Activated CD4-positive, alpha-beta memory T cell treated with anti-CD3 and anti-CD28 coated beads for 36 hours (primary cell): ENCODE measurements at regions of chr15 and their contacts with region 1.

Region 1: DNA sequence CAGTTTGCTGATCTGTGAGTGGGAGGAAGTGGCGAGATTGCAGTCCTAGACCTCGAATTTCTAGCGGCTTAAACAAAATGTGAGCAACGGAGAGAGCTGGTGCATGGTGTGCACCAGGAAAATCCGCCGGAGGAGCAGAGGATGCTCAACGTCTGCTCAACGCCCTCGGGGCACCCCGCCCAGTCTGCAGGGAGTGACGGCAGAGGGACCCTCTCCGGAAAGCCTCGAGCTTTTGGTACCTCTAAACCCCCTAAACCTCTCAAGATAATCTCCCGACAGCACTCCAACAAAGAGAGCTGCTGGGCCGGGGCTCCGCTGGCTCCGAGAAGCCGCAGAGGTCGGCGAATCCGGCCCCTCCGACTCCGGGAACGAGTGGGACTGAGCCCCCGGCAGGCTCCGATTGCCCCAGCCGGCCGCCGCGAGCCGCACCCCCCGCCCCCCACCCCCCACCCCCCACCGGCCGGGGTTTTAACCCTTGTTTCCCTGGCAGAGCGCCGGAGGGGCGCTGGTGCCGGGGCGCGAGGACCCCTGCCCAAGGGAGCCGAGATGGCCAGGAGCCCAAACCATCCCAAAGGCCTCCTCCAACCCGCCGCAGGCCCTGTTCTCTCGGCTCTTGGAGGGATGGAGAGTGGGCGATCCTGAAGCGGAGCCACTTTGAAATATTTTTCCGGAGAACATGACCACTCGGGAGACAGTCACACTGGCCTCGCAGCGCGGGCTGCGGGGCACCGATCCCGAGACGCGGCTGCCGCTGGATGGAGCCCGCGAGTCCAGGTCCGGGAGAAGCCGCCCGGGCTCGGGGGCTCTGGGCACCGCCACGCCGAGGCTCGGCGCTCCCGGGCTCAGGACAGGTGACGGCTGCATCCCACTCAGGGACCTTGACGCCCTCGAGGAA is 1.5 kb downstream of the MEGF11 start:
- DNase-seq: peak; percentile 65
- H3K4me3 Mint-ChIP-seq: peak overlapping the region; percentile 60
- H3K27ac Mint-ChIP-seq: no peak overlapping the region
- H3K4me1 Mint-ChIP-seq: peaks cover 9% of the 10 kb centered on the region
- H3K27me3 Mint-ChIP-seq: peaks cover 58% of the 10 kb centered on the region

Region 2: DNA sequence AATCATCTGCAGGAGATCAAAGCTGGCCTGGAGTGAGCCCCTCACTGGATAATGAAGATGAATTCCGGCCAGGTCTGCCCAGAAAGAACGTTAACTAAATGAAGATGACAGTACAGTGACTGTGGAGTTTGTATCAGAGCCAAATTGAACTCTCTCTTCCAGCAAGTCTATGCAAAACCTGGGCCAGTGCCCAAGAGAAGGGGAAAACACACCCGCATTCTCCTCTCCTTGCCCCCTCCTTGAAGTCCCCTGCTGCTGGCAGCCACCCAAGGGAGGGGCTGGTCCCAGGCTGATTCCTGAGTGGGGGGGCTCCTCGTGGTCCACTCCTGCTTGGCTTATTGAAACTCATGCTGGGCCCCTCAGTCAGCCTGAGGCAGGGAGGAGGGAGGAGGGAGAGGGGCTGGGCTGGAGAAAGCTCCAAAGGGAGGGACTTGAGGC is 227.0 kb before region 1 on chr15:
- CTCF ChIA-PET with region 1: no interaction called
- POLR2A ChIA-PET with region 1: no interaction called
- intact Hi-C with region 1: no loop called
- DNase-seq: no peak
- H3K4me3 Mint-ChIP-seq: no peak overlapping the region
- H3K27ac Mint-ChIP-seq: no peak overlapping the region
- H3K4me1 Mint-ChIP-seq: no peaks in the 10 kb centered on the region
- H3K27me3 Mint-ChIP-seq: peaks cover 14% of the 10 kb centered on the region

Region 3: DNA sequence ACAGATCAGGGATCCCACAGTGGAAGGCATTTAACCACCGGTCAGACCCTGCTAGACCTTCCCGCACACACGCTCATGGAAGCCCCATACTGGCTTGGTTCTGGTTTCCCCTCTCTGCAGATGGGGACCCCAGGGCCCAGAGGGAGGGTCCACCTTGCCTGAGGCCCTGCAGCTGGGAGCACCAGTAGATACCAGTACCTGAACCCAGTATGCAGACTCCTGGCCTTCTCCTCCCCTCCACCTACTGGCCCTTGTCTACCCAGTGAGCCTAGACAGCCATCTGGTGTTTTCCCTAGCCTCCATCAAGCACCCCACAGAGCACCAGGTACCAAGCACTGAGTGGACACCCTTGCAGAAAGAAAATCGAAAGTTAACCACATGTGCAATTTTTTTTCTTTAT is 63.6 kb before region 1 on chr15:
- CTCF ChIA-PET with region 1: no interaction called
- POLR2A ChIA-PET with region 1: no interaction called
- intact Hi-C with region 1: no loop called
- DNase-seq: no peak
- H3K4me3 Mint-ChIP-seq: no peak overlapping the region
- H3K27ac Mint-ChIP-seq: no peak overlapping the region
- H3K4me1 Mint-ChIP-seq: no peaks in the 10 kb centered on the region
- H3K27me3 Mint-ChIP-seq: peaks cover 14% of the 10 kb centered on the region

Region 4: GRCh38 chr15:66276546-66276945 is 24.5 kb after region 1 on chr15:
- CTCF ChIA-PET with region 1: no interaction called
- POLR2A ChIA-PET with region 1: no interaction called
- intact Hi-C with region 1: no loop called
- DNase-seq: no peak
- H3K4me3 Mint-ChIP-seq: no peak overlapping the region
- H3K27ac Mint-ChIP-seq: no peak overlapping the region
- H3K4me1 Mint-ChIP-seq: no peaks in the 10 kb centered on the region
- H3K27me3 Mint-ChIP-seq: no peaks in the 10 kb centered on the region

Region 5: DNA sequence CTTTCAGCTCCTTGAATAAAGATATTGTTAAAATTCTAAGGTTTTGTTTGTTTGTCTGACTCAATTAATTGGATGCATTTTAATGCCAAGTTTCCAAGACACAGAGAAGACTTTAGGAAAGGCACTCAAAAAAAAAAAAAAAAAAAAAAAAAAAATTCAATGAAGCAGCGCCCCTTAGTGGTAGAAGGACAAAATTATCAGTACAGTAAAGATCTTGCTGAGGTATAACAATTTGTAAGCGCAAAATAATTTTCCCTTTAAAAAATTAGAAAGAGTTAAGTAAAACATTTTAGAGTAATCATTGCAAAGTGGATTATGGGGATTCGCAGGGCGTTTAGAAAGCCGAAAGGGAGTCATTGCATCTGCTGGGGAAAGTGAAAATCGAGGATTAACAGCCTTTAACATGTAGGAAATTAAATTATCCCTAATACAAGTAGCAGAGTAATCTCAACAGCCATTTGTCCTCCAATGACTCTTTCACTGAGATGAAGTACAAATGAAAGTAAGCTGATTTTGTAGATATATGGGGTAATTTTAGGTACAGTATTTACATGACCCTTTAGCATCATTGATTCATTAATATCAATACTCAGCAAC is 35.5 kb after region 1 on chr15:
- CTCF ChIA-PET with region 1: interaction called, 9 read pairs
- POLR2A ChIA-PET with region 1: no interaction called
- intact Hi-C with region 1: loop called (anchors 5 kb)
- DNase-seq: no peak
- H3K4me3 Mint-ChIP-seq: no peak overlapping the region
- H3K27ac Mint-ChIP-seq: no peak overlapping the region
- H3K4me1 Mint-ChIP-seq: peaks cover 21% of the 10 kb centered on the region
- H3K27me3 Mint-ChIP-seq: no peaks in the 10 kb centered on the region